ENCODE measurements at regions of chr15 and their contacts with region 1.

Region 1: DNA sequence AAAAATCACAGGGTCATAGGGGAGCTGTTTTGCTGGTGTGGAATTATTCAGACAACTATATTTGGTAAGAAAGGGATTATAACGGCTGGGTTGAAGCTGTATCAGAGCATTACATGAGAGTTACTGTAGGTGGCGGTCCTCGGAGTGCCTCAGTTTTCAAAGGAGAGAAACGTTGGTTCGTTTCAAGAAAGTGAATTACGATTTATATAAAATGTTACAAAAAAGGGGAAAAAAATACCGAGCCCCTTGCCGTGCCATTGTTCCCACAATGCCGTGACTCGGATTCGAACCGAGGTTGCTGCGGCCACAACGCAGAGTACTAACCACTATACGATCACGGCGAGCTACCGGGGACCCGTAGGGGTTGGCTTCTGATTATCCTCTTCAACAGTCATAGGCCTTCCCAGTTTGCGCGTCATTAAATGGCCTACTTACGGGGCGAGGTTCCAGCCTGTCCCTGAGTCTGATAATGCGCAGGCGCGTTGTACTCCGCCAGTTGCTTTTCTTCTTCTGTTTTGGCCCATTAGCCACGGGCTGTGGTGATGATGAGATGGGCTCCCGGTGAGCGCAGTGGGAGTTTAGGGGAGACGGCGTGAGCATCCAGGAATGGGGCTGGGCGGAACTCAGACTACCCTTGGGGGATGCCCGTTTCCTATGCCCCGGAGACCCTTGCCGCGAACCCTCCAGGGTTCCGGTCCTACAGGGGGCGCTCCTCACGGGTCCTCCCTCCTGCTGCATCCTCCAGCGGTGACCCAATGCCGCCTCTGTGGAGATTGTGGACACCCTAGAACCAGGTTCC is 10.8 kb upstream of the SHF start:
- DNase-seq: peak; percentile 100
- ATAC-seq: peak; percentile 62
- H3K4me3 ChIP-seq: peak overlapping the region; percentile 72 to 95 (median 85)
- H3K4me3 Mint-ChIP-seq: no peak overlapping the region
- H3K27ac ChIP-seq: peak overlapping the region; percentile 96 to 97
- H3K27ac Mint-ChIP-seq: no peak overlapping the region
- H3K4me1 ChIP-seq: peaks cover 11 to 18% of the 10 kb centered on the region in 2 donors
- H3K4me1 Mint-ChIP-seq: peaks cover 10% of the 10 kb centered on the region
- H3K27me3 ChIP-seq: no peaks in the 10 kb centered on the region
- H3K27me3 Mint-ChIP-seq: no peaks in the 10 kb centered on the region
- CTCF ChIP-seq: peak; percentile 68

Region 2: GRCh38 chr15:44426975-44427755 is 771.4 kb before region 1 on chr15 and contains the start of gene CTDSPL2:
- CTCF ChIA-PET with region 1: no interaction called
- POLR2A ChIA-PET with region 1: no interaction called
- intact Hi-C with region 1: loop called (anchors 2 kb)
- DNase-seq: peak; percentile 94
- ATAC-seq: peak; percentile 97
- H3K4me3 ChIP-seq: peak within 1 kb of the TSS; percentile 93 to 100 (median 98)
- H3K4me3 Mint-ChIP-seq: peak within 1 kb of the TSS; percentile 96
- H3K27ac ChIP-seq: peak within 1 kb of the TSS; percentile 95 to 98
- H3K27ac Mint-ChIP-seq: peak within 1 kb of the TSS; percentile 98
- H3K4me1 ChIP-seq: peaks cover 18 to 23% of the 10 kb centered on the region in 2 donors
- H3K4me1 Mint-ChIP-seq: peaks cover 46% of the 10 kb centered on the region
- H3K27me3 ChIP-seq: no peaks in the 10 kb centered on the region
- H3K27me3 Mint-ChIP-seq: no peaks in the 10 kb centered on the region
- CTCF ChIP-seq: peak; percentile 34
- total RNA-seq, gene CTDSPL2: 79.5 and 84.1 TPM in 2 replicates

Region 3: DNA sequence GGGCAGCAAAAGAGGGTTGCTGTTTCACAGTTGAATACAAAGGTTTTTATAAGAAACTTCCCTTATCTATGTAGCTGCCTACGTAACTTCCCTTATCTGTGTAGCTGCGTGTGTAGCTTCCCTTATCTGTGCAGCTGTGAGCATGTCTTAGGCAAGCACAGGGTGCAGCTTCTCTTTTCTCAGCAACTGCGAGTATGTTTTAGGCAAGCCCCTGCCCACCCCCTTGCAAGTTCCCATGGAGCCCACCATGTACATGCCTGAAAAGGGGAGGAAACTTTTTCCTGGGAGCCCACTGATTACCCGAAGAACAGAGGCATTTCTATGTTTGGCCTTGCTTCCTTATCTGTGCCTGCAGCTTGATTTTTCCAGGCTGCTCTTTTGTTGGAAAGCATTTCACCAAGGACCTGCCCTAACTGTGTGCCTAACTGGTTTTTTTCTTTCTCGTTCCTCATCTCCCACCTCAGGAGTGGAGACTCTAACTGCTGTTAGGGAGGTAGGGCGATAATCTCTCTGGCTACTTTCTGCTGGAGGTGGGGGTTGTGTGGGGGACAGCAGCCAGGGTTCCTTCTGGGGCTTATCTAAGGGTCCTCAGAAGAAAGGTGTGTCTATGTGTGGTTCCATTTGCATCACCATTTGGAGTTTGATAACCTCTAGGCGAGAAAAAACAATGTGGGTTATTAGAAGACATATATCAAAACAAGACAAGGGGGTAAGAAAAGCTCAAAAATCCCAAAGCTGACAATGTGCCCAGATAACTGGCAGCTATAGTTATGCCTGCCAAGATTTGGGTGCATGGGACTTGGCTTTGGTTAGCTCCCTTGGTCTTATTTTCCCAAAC is 149.5 kb before region 1 on chr15:
- CTCF ChIA-PET with region 1: no interaction called
- POLR2A ChIA-PET with region 1: interaction called, 10 read pairs
- intact Hi-C with region 1: loop called (anchors 2 kb)
- DNase-seq: peak; percentile 90
- ATAC-seq: peak; percentile 86
- H3K4me3 ChIP-seq: peak overlapping the region; percentile 11 to 62 (median 40)
- H3K4me3 Mint-ChIP-seq: peak overlapping the region; percentile 80
- H3K27ac ChIP-seq: peak overlapping the region; percentile 92 to 95
- H3K27ac Mint-ChIP-seq: peak overlapping the region; percentile 97
- H3K4me1 ChIP-seq: peaks cover 37 to 42% of the 10 kb centered on the region in 2 donors
- H3K4me1 Mint-ChIP-seq: peaks cover 34% of the 10 kb centered on the region
- H3K27me3 ChIP-seq: no peaks in the 10 kb centered on the region
- H3K27me3 Mint-ChIP-seq: no peaks in the 10 kb centered on the region
- CTCF ChIP-seq: no peak

Region 4: GRCh38 chr15:45126535-45127158 is 71.9 kb before region 1 on chr15:
- CTCF ChIA-PET with region 1: interaction called, 10 read pairs
- POLR2A ChIA-PET with region 1: no interaction called
- intact Hi-C with region 1: no loop called
- DNase-seq: peak; percentile 70
- ATAC-seq: peak; percentile 59
- H3K4me3 ChIP-seq: no peak overlapping the region
- H3K4me3 Mint-ChIP-seq: no peak overlapping the region
- H3K27ac ChIP-seq: no peak overlapping the region
- H3K27ac Mint-ChIP-seq: no peak overlapping the region
- H3K4me1 ChIP-seq: peaks cover 15 to 22% of the 10 kb centered on the region in 2 donors
- H3K4me1 Mint-ChIP-seq: peaks cover 8% of the 10 kb centered on the region
- H3K27me3 ChIP-seq: peaks cover 0 to 55% (median 28%) of the 10 kb centered on the region in 4 experiments
- H3K27me3 Mint-ChIP-seq: peaks cover 60% of the 10 kb centered on the region
- CTCF ChIP-seq: peak; percentile 93

Region 5: DNA sequence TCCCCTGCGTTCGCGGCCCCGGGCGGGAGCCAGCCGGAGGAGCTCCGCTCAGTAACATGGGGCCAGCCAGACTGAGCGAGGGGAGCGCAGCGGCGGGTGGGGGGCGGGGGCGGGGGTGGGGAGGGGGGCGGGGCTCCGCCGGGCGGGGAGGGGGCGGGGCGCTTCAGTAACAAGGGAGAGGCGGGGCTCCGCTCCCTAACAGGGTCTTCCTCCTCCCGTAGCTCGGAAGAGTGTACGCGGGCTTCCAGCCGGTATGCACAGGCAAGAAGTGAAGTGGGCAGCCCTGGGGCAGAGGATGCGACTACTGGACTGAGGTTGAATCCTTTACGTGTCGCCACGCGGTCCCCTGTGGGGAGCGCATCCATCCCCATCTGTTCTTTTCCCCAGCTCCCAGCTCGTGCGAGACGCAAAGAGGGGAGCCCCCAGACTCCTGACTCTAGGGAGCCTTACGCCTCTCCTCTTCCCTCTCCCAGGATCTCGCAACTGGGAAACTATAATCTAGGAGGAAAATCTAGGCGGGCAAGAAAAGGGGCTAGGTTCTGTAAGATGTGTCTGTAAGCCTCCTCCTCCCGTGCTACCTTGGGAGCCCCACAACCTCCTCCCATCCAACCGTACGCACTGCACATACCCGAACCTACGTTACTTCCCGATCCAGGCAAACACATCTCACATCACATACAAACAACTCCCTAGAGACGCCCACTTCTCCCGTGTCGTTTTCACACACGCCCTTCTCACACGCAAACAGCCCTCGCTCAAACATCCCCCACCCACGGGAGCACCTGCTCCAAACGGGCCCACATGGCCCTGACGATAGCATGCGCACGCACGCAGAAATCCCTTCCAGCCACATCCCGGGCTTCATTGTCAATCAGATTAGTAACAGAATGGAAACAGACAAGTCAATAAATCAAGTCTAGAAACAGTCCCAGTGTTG is 10.4 kb before region 1 on chr15 and contains the start of gene SHF:
- CTCF ChIA-PET with region 1: interaction called, 23 read pairs
- POLR2A ChIA-PET with region 1: interaction called, 48 read pairs
- intact Hi-C with region 1: loop called (anchors 1 kb)
- DNase-seq: peak; percentile 87
- ATAC-seq: peak; percentile 79
- H3K4me3 ChIP-seq: peak within 1 kb of the TSS; percentile 32 to 98 (median 77)
- H3K4me3 Mint-ChIP-seq: peak within 1 kb of the TSS; percentile 91
- H3K27ac ChIP-seq: peak within 1 kb of the TSS; percentile 73 to 77
- H3K27ac Mint-ChIP-seq: peak within 1 kb of the TSS; percentile 78
- H3K4me1 ChIP-seq: peaks cover 0 to 15% of the 10 kb centered on the region in 2 donors
- H3K4me1 Mint-ChIP-seq: peaks cover 20% of the 10 kb centered on the region
- H3K27me3 ChIP-seq: no peaks in the 10 kb centered on the region
- H3K27me3 Mint-ChIP-seq: peaks cover 7% of the 10 kb centered on the region
- CTCF ChIP-seq: no peak
- total RNA-seq, gene SHF: 15.4 and 16.9 TPM in 2 replicates

Region 6: GRCh38 chr15:45378149-45378912 is 179.8 kb after region 1 on chr15 and contains the start of gene GATM:
- CTCF ChIA-PET with region 1: no interaction called
- POLR2A ChIA-PET with region 1: interaction called, 3 read pairs
- intact Hi-C with region 1: loop called (anchors 1 kb)
- DNase-seq: peak; percentile 85
- ATAC-seq: peak; percentile 86
- H3K4me3 ChIP-seq: peak within 1 kb of the TSS; percentile 38 to 86 (median 72)
- H3K4me3 Mint-ChIP-seq: peak within 1 kb of the TSS; percentile 90
- H3K27ac ChIP-seq: peak within 1 kb of the TSS; percentile 51 to 63
- H3K27ac Mint-ChIP-seq: peak within 1 kb of the TSS; percentile 89
- H3K4me1 ChIP-seq: peaks cover 9 to 25% of the 10 kb centered on the region in 2 donors
- H3K4me1 Mint-ChIP-seq: peaks cover 20% of the 10 kb centered on the region
- H3K27me3 ChIP-seq: peaks cover 0 to 20% (median 2%) of the 10 kb centered on the region in 4 experiments
- H3K27me3 Mint-ChIP-seq: peaks cover 3% of the 10 kb centered on the region
- CTCF ChIP-seq: peak; percentile 23
- total RNA-seq, gene GATM: 16.6 and 18.2 TPM in 2 replicates

Region 7: DNA sequence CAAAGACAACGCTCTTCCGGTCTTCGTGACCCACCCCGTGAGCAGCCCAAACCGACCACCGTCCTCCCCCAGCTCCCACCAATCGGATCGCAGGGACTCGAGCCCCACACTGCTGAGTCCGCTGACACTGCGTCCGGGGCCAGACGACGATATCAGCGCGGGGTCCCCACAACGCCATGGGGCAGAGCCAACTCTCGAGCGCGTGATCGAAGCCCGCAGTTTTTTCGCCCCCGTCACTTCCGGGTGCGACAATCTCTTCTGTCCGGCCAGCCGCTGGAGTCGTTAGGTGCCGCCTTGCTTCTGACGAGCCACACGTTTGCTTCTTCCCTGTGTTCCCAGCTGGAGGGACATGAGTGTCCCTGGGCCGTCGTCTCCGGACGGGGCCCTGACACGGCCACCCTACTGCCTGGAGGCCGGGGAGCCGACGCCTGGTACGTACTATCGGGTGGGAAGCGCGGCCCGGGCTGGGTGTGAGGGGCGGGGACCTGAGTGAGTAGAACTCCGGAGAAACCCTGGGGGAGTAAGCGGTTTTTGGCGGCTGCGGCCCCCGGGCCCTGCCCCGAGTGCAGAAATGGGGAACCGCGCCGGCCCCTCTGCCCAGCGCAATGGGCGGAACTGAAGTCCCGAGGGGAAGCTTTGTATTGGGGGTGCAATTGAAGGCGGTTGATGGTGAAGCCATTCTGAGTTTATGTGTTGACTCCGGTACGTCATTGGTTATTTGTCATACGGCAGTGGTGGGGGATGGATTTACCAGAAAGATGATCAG is 388.7 kb after region 1 on chr15 and contains the start of gene BLOC1S6:
- CTCF ChIA-PET with region 1: interaction called, 4 read pairs
- POLR2A ChIA-PET with region 1: interaction called, 8 read pairs
- intact Hi-C with region 1: loop called (anchors 1 kb)
- DNase-seq: peak; percentile 99
- ATAC-seq: peak; percentile 86
- H3K4me3 ChIP-seq: peak within 1 kb of the TSS; percentile 64 to 98 (median 89)
- H3K4me3 Mint-ChIP-seq: peak within 1 kb of the TSS; percentile 100
- H3K27ac ChIP-seq: peak within 1 kb of the TSS; percentile 98 to 99
- H3K27ac Mint-ChIP-seq: peak within 1 kb of the TSS; percentile 100
- H3K4me1 ChIP-seq: peaks cover 22 to 29% of the 10 kb centered on the region in 2 donors
- H3K4me1 Mint-ChIP-seq: peaks cover 46% of the 10 kb centered on the region
- H3K27me3 ChIP-seq: no peaks in the 10 kb centered on the region
- H3K27me3 Mint-ChIP-seq: no peaks in the 10 kb centered on the region
- CTCF ChIP-seq: no peak
- total RNA-seq, gene BLOC1S6: 51.3 and 60.8 TPM in 2 replicates